Gastrocnemius medialis (tissue), 4 donors: ENCODE measurements at regions of chr15 and their contacts with region 1.

Region 1: DNA sequence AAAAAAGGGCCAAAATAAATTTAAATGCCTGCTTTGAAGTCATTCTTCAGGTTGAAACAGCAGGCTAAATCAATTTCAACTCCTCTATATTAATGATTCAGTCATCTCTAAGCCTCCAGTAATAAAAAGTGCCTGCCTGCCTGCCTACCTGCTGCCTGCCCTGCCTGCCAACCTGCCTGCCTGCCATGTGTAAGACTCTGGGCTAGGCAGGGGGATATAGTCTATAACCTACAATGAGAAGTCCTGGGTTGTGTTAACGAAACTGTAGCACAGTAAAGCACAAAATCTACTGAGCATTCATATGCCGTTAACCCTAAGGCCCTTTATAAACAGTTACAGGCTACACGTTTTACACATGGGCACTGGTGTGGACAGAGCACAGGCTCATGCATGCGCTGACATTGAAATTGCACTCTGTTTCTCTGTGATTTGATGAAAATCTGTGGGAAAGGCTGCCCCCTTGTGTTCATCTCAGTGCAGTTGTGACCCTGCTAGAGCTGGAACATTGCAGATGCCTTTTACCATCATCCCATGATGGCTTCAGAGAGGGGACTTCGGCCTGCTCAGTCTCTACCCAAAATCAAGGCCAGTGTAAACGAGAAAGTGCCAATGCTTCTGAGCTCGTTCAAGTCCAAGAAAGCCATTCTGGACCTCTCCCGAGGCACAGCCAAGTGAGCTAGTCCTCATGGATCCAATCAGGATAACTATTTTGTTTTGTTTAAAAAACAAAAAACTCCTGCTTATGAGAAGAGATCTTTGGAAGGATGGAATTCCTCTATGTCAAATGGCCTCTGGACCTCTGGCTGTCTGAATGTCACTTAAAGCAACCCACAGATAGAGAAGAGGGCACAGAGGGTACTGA is 64.6 kb downstream of the EFL1 start:
- DNase-seq: peak; percentile 60 to 62
- ATAC-seq: peak; percentile 78 to 81
- H3K4me3 ChIP-seq: no peak overlapping the region
- H3K27ac ChIP-seq: peak overlapping the region in 2 of 4 donors; percentile 2 to 36
- H3K4me1 ChIP-seq: peaks cover 27 to 32% of the 10 kb centered on the region in 2 donors
- H3K27me3 ChIP-seq: no peaks in the 10 kb centered on the region
- CTCF ChIP-seq: peak; percentile 64 to 86 (median 81)
- POLR2A ChIP-seq: no peak

Region 2: DNA sequence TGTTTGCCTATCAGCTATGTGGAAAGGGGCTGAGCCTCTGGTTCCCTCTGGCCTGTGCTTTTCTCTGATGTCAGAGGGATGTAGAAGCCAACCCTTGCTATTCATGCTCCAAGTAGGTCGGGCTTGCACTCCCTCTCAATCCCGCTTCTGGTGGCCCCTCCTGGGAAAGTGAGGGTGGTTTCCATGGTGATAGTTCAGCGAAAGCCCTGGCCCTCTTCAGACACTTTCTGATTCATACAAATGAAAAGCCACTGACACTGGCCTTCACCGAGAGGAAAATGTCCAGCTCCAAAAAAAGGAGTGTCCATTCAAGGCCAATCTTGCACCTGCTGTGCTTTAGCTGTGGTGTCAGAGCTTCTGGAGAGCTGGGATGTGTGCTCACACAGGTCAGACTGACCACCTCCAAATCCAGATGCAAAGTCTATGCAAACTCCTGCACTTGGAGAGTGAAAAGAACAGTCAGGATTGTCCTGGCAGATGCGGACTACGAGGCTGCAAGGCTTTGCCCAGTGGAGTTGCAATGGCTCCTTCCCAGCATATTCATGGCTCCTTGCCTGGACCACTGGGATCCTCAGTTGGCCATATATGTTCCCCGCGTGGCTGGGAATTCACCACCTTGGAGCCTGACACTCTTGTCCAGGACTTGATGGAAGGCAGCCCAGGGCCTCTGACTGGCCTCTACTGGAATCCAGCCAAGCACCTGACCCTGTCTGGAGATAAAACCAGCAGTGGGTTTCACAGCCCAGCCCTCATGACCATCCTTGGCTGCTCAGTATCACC is 1322.2 kb before region 1 on chr15:
- in situ Hi-C with region 1: no loop called
- intact Hi-C with region 1: no loop called
- DNase-seq: peak in 1 of 2 donors; percentile 21
- ATAC-seq: no peak
- H3K4me3 ChIP-seq: no peak overlapping the region
- H3K27ac ChIP-seq: no peak overlapping the region
- H3K4me1 ChIP-seq: peaks cover 0 to 14% of the 10 kb centered on the region in 2 donors
- H3K27me3 ChIP-seq: no peaks in the 10 kb centered on the region
- CTCF ChIP-seq: no peak
- POLR2A ChIP-seq: no peak

Region 3: GRCh38 chr15:81473177-81473576 is 724.8 kb before region 1 on chr15:
- in situ Hi-C with region 1: loop called in 1 of 4 experiments (anchors 10 kb)
- intact Hi-C with region 1: no loop called
- DNase-seq: no peak
- ATAC-seq: no peak
- H3K4me3 ChIP-seq: no peak overlapping the region
- H3K27ac ChIP-seq: no peak overlapping the region
- H3K4me1 ChIP-seq: no peaks in the 10 kb centered on the region
- H3K27me3 ChIP-seq: no peaks in the 10 kb centered on the region
- CTCF ChIP-seq: no peak
- POLR2A ChIP-seq: no peak

Region 4: GRCh38 chr15:81480645-81481053 is 717.3 kb before region 1 on chr15:
- in situ Hi-C with region 1: loop called in 1 of 4 experiments (anchors 10 kb)
- intact Hi-C with region 1: loop called (anchors 1 kb)
- DNase-seq: no peak
- ATAC-seq: peak; percentile 52 to 75
- H3K4me3 ChIP-seq: no peak overlapping the region
- H3K27ac ChIP-seq: no peak overlapping the region
- H3K4me1 ChIP-seq: no peaks in the 10 kb centered on the region
- H3K27me3 ChIP-seq: no peaks in the 10 kb centered on the region
- CTCF ChIP-seq: peak; percentile 69 to 85 (median 82)
- POLR2A ChIP-seq: no peak

Region 5: DNA sequence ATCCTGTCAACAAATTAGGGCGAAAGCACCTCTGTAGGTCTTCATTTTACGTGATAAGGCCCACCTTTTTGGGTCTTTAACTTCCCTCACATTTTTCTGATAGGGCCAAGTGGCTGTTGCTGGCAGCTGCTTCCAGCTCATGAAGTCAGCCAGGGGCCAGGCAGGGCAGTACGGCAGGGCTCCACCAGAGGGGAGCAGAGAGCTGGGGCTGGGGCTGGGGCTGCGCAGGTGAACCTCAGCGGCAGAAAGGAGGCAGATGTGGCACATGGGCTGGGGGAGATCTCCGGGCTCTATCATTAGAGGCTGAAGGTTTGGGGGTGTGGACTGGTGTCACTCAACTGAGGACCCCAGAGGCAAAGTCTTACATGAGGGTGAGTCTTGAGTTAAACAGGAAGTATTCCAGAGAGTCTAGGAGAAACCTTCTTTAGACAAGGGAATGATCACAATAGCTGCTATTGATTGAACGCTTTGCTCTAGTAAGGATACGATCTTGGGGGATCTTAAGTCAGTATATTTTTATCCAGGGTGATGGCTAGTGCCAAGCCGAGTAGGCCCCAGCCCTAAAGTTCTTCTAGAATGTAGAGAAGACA is 89.4 kb before region 1 on chr15:
- in situ Hi-C with region 1: loop called in 2 of 4 experiments (anchors 10 kb)
- intact Hi-C with region 1: loop called (anchors 1 kb)
- DNase-seq: peak; percentile 28 to 49
- ATAC-seq: peak; percentile 74
- H3K4me3 ChIP-seq: no peak overlapping the region
- H3K27ac ChIP-seq: no peak overlapping the region
- H3K4me1 ChIP-seq: no peaks in the 10 kb centered on the region
- H3K27me3 ChIP-seq: no peaks in the 10 kb centered on the region
- CTCF ChIP-seq: peak; percentile 73 to 94 (median 85)
- POLR2A ChIP-seq: no peak

Region 6: GRCh38 chr15:82139823-82140268 is 58.1 kb before region 1 on chr15:
- in situ Hi-C with region 1: no loop called
- intact Hi-C with region 1: loop called (anchors 5 kb)
- DNase-seq: no peak
- ATAC-seq: no peak
- H3K4me3 ChIP-seq: no peak overlapping the region
- H3K27ac ChIP-seq: no peak overlapping the region
- H3K4me1 ChIP-seq: no peaks in the 10 kb centered on the region
- H3K27me3 ChIP-seq: no peaks in the 10 kb centered on the region
- CTCF ChIP-seq: peak; percentile 38 to 70 (median 63)
- POLR2A ChIP-seq: no peak